Heart right ventricle (tissue), 16 donors: ENCODE measurements at regions of chrX and their contacts with region 1.

Region 1: GRCh38 chrX:151680805-151681204 is 14.5 kb upstream of the PRRG3 start:
- DNase-seq: no peak
- ATAC-seq: peak in 5 of 8 donors; percentile 33 to 63 (median 61)
- H3K4me3 ChIP-seq: no peak overlapping the region
- H3K27ac ChIP-seq: no peak overlapping the region
- H3K4me1 ChIP-seq: no peaks in the 10 kb centered on the region
- H3K27me3 ChIP-seq: peaks cover 0 to 5% (median 0%) of the 10 kb centered on the region in 7 donors
- CTCF ChIP-seq: peak; percentile 22 to 65 (median 61)

Region 2: DNA sequence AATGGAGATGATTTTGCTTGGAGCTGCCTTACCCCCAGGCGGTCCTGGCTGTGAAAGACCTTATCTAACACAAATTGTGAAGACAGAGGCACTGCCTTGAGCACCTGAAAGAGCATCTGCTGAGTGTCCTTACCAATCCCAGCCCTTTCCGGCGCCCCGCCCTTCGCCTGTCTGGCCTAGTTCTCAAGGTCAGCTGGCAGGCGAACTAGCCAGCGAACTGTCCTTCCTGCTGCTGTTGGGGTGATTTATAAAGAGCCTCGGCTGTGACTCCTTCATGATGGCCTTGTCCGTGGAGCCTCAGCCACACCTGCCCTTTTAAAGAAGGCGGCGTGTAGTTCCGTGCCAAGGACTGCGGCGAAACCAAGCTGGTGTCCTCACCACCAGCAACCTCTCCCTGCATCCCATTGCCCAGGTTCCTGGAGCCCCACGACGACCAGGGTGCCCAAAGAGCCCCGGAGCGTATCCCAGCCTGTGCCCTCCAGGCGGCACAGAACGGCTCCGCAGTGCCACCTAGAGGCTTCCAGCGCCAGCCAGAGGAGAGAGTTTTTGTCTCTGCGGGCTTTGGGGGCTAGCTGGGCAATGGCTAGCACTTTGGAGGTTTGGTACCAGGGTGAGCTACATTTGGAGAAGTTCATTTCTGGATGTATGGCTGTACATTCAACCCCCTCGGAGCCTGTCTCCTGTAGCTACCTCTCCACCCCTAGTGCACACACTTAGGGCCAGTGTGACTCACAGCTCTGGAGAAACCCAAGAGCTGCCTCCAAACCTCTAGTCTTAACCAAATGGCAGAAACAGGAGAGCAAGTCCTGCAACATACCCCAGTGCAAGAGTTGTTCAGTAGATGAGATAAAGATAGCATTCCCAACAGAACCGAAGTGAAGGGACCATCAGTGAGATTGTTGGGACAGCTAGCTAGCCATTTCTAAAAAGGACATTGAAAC is 320.6 kb before region 1 on chrX:
- intact Hi-C with region 1: loop called in 1 of 10 experiments (anchors 10 kb)
- DNase-seq: peak; percentile 3 to 30
- ATAC-seq: peak in 4 of 8 donors; percentile 42 to 77 (median 52)
- H3K4me3 ChIP-seq: no peak overlapping the region
- H3K27ac ChIP-seq: no peak overlapping the region
- H3K4me1 ChIP-seq: no peaks in the 10 kb centered on the region
- H3K27me3 ChIP-seq: peaks cover 0 to 36% (median 0%) of the 10 kb centered on the region in 7 donors
- CTCF ChIP-seq: peak; percentile 13 to 68 (median 53)

Region 3: DNA sequence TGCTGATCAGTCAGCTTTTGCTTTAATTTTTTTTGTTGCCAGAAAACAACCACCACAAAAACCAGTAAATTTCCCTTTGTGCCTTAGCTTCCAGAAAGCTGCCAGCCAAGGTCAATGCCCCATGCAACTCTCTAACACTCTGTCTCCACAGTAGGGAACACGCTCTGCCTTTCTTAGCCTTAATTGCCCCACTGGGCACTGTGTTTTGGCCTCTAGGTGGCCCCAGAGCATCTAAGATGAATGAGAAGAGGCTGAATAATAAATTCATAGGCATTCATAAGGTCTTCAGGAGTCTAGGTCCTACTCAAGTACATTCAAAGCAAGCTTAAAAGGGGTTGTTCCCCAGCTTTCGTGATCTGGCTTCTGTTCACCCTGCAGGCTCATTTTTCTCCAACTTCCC is 175.0 kb before region 1 on chrX:
- intact Hi-C with region 1: loop called in 2 of 10 experiments (anchors 2 to 10 kb)
- DNase-seq: no peak
- ATAC-seq: no peak
- H3K4me3 ChIP-seq: no peak overlapping the region
- H3K27ac ChIP-seq: no peak overlapping the region
- H3K4me1 ChIP-seq: no peaks in the 10 kb centered on the region
- H3K27me3 ChIP-seq: peaks cover 0 to 15% (median 0%) of the 10 kb centered on the region in 7 donors
- CTCF ChIP-seq: peak in 8 of 9 donors; percentile 6 to 48 (median 38)

Region 4: GRCh38 chrX:152038798-152039197 is 358.0 kb after region 1 on chrX:
- intact Hi-C with region 1: no loop called
- DNase-seq: no peak
- ATAC-seq: no peak
- H3K4me3 ChIP-seq: no peak overlapping the region
- H3K27ac ChIP-seq: no peak overlapping the region
- H3K4me1 ChIP-seq: no peaks in the 10 kb centered on the region
- H3K27me3 ChIP-seq: no peaks in the 10 kb centered on the region
- CTCF ChIP-seq: no peak